Panc1 (cell line): ENCODE measurements at regions of chr17 and their contacts with region 1.

Region 1: DNA sequence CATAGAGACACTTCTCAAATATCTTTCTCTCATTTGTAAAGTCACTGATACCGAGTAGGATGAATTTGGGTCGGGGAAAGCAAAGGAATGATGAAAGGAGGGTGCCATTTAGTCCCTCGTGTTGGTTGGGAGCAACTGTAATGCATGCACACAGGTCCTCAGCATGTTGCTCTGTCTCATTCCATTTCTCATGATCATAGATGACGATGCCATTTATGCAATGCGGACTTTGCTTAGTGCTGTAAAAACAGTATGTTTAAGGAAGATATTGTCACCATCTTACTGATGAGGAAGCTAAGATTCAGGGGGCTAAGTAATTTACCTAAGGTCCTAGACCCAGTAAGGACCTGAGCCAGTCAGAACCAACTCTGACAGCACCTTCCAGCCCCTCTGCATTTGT is 100.1 kb downstream of the AATF start:
- DNase-seq: no peak
- ATAC-seq: no peak
- H3K4me3 ChIP-seq: no peak overlapping the region
- H3K27ac ChIP-seq: no peak overlapping the region
- H3K4me1 ChIP-seq: no peaks in the 10 kb centered on the region; the same call in 1 of the 2 replicates
- H3K27me3 ChIP-seq: no peaks in the 10 kb centered on the region
- CTCF ChIP-seq: no peak

Region 2: GRCh38 chr17:36705874-36706731 is 342.7 kb before region 1 on chr17:
- CTCF ChIA-PET with region 1: interaction called, 15 read pairs
- POLR2A ChIA-PET with region 1: no interaction called
- in situ Hi-C with region 1: no loop called
- intact Hi-C with region 1: no loop called
- DNase-seq: peak; percentile 10
- ATAC-seq: peak; percentile 93
- H3K4me3 ChIP-seq: no peak overlapping the region
- H3K27ac ChIP-seq: no peak overlapping the region
- H3K4me1 ChIP-seq: no peaks in the 10 kb centered on the region
- H3K27me3 ChIP-seq: peaks cover 9% of the 10 kb centered on the region; the same call in 1 of the 2 replicates
- CTCF ChIP-seq: peak; percentile 77